CD14-positive monocyte (primary cell): ENCODE measurements at regions of chr1 and their contacts with region 1.

Region 1: DNA sequence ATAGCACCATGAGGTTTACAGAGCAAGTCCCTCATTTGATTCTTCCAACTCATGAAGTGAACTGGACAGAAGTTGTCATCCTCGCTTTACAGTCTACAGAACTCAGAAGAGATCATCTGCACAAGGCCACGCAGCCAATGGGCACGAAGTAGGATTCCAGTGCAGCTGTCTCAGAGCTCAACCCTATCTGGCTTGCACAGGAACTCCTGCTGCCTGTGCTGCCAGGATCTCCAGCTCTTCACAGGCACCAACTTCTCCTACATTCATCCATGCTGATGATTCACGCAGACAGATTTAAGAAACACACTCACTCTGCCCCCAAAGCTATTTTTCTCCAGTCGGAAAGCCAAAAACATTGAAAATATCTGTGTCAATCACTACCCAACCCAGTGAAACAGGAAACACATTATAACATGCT is 157.0 kb downstream of the RERE start:
- DNase-seq: peak in 2 of 3 donors; percentile 11 to 31
- H3K4me3 ChIP-seq: no peak overlapping the region
- H3K4me3 Mint-ChIP-seq: no peak overlapping the region
- H3K27ac ChIP-seq: peak overlapping the region in 1 of 2 donors; percentile 23
- H3K27ac Mint-ChIP-seq: no peak overlapping the region
- H3K4me1 ChIP-seq: peaks cover 33 to 44% of the 10 kb centered on the region in 2 donors
- H3K4me1 Mint-ChIP-seq: peaks cover 3% of the 10 kb centered on the region
- H3K27me3 ChIP-seq: no peaks in the 10 kb centered on the region
- H3K27me3 Mint-ChIP-seq: no peaks in the 10 kb centered on the region
- CTCF ChIP-seq: no peak

Region 2: GRCh38 chr1:8643542-8644536 is 16.6 kb before region 1 on chr1:
- intact Hi-C with region 1: no loop called
- DNase-seq: no peak
- H3K4me3 ChIP-seq: no peak overlapping the region
- H3K4me3 Mint-ChIP-seq: no peak overlapping the region
- H3K27ac ChIP-seq: no peak overlapping the region
- H3K27ac Mint-ChIP-seq: no peak overlapping the region
- H3K4me1 ChIP-seq: peaks cover 0 to 12% of the 10 kb centered on the region in 2 donors
- H3K4me1 Mint-ChIP-seq: peaks cover 14% of the 10 kb centered on the region
- H3K27me3 ChIP-seq: no peaks in the 10 kb centered on the region
- H3K27me3 Mint-ChIP-seq: peaks cover 0 to 1% (median 0%) of the 10 kb centered on the region in 3 donors
- CTCF ChIP-seq: no peak

Region 3: DNA sequence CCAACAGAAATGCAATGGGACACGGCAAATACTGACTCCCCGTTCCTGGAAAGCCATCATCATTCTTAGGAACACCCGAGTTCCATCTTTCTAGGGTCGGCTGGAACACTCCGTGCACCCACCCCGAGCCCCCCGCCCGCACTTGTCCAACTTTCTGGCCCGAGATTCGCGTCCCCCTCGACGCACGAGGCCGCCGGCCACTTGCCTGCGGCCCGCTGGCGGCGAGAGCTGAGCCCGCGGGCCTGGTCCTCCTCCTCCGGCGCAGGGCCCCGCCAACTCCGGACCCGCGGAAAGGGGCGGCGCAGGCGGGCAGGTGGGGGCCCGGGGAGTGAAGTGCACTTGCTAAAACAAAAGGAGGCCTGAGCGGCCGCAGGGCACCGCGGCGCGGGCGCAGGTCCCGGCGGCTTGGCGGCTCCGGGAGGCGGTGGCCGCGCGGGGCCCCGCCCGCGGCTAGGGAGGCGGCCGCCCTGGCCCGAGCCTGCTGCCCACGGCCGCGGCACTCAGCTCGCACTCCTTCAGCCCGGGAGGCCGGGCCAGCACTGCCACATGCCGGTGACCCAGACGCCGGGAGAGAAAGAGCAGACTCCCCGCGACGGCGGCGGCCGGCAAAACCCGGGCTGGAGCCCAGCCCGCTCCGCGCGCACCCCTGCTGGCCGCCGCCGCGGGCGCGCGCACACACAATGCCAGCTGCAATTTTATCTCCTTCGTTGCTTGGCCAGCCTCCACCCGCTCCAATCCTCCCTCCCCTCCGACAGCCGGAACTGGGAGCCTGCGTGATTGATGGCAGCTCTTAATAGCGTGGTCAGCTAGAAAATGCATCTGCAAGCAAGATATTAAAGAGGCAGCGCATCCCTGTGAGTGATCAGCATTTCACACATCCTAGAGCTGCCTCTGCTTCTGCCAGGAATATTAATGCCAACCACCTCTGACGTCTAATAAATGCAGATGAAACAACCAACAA is 42.7 kb after region 1 on chr1:
- intact Hi-C with region 1: loop called in 1 of 2 experiments (anchors 2 kb)
- DNase-seq: peak; percentile 77 to 80 (median 78)
- H3K4me3 ChIP-seq: peak overlapping the region; percentile 48 to 80 (median 74)
- H3K4me3 Mint-ChIP-seq: peak overlapping the region; percentile 85 to 95
- H3K27ac ChIP-seq: peak overlapping the region in 1 of 2 donors; percentile 55
- H3K27ac Mint-ChIP-seq: peak overlapping the region; percentile 53 to 85 (median 80)
- H3K4me1 ChIP-seq: peaks cover 28 to 33% of the 10 kb centered on the region in 2 donors
- H3K4me1 Mint-ChIP-seq: peaks cover 32% of the 10 kb centered on the region
- H3K27me3 ChIP-seq: peaks cover 2 to 8% of the 10 kb centered on the region in 2 donors
- H3K27me3 Mint-ChIP-seq: peaks cover 12 to 32% (median 21%) of the 10 kb centered on the region in 3 donors
- CTCF ChIP-seq: no peak